Activated naive CD4-positive, alpha-beta T cell treated with anti-CD3 and anti-CD28 coated beads for 36 hours (primary cell): ENCODE measurements at regions of chr2 and their contacts with region 1.

Region 1: GRCh38 chr2:176096986-176097819 is 2.4 kb upstream of the HOXD12 start:
- DNase-seq: peak; percentile 70
- H3K4me3 Mint-ChIP-seq: peak overlapping the region; percentile 51
- H3K27ac Mint-ChIP-seq: no peak overlapping the region
- H3K4me1 Mint-ChIP-seq: peaks cover 22% of the 10 kb centered on the region
- H3K27me3 Mint-ChIP-seq: peaks cover 80% of the 10 kb centered on the region

Region 2: DNA sequence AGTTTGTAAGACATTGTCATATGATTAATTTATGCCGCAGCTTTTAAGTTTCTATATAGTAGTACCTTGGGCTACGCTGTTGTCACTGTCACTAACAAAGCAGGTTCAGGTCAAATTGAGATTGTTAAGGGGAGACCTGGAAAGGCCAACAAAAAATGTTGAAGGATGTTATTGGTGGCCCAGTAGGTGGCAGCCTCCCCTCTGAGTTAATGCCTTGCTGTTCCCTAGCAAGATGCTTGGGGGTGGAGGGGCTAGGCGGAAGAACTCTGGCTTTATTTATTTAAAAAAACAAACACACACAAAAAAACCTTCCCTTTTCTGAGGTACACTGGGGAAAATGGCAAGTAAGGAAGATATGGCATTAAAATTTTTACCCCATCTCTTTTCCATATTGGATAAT is 787.4 kb before region 1 on chr2:
- CTCF ChIA-PET with region 1: no interaction called
- intact Hi-C with region 1: loop called (anchors 5 kb)
- DNase-seq: peak; percentile 33
- H3K4me3 Mint-ChIP-seq: no peak overlapping the region
- H3K27ac Mint-ChIP-seq: no peak overlapping the region
- H3K4me1 Mint-ChIP-seq: no peaks in the 10 kb centered on the region
- H3K27me3 Mint-ChIP-seq: peaks cover 4% of the 10 kb centered on the region

Region 3: DNA sequence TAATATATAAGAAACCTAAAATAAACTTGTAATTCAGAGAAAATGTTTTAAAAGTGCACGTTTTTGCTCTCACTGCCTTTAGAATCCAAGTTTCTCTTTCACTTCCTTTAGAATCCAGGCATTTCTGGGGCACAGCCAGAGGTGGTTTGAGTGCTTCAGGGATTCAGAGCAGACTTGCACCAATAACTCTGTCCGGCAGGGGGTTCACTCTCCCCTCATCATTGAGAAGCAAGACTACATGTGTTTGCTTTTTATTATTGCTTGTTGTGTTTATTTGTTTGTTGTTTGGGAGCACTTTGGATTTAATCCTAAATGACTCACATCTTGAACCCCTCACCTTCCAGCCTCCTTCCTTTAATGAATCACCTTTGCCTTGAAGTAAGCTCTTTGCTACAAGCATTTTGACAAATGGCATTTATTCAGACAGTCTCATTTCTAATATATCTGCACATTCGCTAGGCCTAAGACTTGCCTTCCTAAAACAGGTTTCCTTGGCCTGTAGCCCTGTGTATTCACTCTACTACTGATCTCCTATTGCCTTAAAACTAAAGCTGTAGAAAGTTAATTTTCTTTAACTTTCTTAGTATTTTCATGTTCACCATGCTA is 682.2 kb before region 1 on chr2:
- CTCF ChIA-PET with region 1: no interaction called
- intact Hi-C with region 1: loop called (anchors 1 kb)
- DNase-seq: peak; percentile 26
- H3K4me3 Mint-ChIP-seq: no peak overlapping the region
- H3K27ac Mint-ChIP-seq: no peak overlapping the region
- H3K4me1 Mint-ChIP-seq: no peaks in the 10 kb centered on the region
- H3K27me3 Mint-ChIP-seq: no peaks in the 10 kb centered on the region

Region 4: DNA sequence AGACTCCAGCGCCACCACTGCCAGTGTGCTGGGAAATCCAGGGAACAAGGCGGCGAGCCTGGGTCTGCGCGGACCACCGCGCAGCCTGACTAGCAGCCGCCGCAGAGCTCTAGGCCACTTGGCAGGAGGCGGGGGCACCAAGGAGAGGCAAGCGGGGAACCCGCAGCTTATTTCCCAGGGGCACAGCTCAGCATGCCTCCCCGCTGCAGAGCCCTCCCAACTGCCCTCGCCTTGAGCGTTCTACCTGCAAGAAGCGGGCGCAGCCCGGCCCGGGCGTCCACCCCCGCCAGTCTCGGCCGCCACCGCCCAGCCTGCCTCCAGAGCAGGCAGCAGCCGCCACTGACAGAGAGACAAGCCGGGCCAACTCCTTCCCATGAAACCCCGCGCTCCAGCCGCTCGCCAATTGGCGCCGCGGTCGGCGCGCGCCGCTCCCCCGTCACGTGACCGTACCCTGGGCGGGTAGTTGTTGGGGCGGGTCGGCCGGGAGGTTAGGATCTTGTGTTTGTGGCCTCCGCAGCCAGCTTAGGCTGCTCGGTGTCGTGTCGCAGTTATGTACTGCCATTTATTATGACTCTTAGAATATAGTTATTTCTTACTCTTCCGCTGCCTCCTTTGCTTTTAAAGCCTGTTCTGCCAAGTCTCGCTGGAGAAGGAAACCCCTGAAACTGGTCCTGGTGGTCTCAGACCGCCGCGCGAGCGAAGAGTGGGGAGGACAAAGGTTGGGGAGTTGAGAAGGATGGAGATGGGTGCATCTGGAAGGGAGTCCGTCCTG is 95.1 kb before region 1 on chr2 and contains the start of gene LNPK:
- CTCF ChIA-PET with region 1: no interaction called
- intact Hi-C with region 1: loop called (anchors 2 kb)
- DNase-seq: peak; percentile 93
- H3K4me3 Mint-ChIP-seq: peak within 1 kb of the TSS; percentile 88
- H3K27ac Mint-ChIP-seq: peak within 1 kb of the TSS; percentile 68
- H3K4me1 Mint-ChIP-seq: peaks cover 17% of the 10 kb centered on the region
- H3K27me3 Mint-ChIP-seq: no peaks in the 10 kb centered on the region
- total RNA-seq, gene LNPK: 22.2 to 23.9 TPM

Region 5: DNA sequence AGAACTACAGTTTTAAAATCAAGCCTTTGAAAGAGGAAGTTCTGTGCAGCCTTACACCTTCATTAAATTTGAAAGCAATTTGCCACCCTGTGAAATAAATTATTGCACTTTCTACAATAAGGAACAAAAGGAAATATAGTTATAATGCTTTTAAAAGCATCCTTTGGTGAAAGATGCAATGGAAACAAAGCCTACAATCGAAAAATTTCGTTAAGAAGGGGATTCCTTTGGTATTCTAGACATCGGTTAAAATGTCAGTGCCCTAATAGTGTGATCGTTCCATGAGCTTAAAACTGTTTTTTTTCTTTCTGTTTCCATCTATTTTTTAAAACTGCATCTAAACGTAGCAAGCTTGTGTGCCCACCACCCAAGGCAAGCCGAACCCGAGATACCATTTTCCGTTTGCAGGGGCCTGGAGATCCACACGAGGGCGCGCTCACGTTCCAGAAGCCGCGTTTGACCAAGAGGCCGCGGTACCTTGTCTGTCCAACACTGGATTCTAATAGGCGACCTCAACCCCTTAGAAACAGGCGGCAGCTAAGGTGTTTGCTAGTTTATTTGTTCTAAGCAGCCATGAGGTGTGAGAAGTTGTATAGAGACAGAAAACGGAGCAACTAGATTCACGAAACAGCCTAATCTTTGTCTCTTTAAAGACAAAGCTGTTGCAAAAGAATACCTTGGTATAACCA is 13.9 kb after region 1 on chr2:
- CTCF ChIA-PET with region 1: interaction called, 9 read pairs
- intact Hi-C with region 1: loop called (anchors 2 kb)
- DNase-seq: no peak
- H3K4me3 Mint-ChIP-seq: no peak overlapping the region
- H3K27ac Mint-ChIP-seq: no peak overlapping the region
- H3K4me1 Mint-ChIP-seq: peaks cover 17% of the 10 kb centered on the region
- H3K27me3 Mint-ChIP-seq: peaks cover 80% of the 10 kb centered on the region

Region 6: GRCh38 chr2:176526995-176527901 is 430.0 kb after region 1 on chr2:
- CTCF ChIA-PET with region 1: no interaction called
- intact Hi-C with region 1: no loop called
- DNase-seq: no peak
- H3K4me3 Mint-ChIP-seq: no peak overlapping the region
- H3K27ac Mint-ChIP-seq: no peak overlapping the region
- H3K4me1 Mint-ChIP-seq: no peaks in the 10 kb centered on the region
- H3K27me3 Mint-ChIP-seq: peaks cover 25% of the 10 kb centered on the region